Panc1 (cell line): ENCODE measurements at regions of chr3 and their contacts with region 1.

Region 1: GRCh38 chr3:32667122-32667521 is 17.9 kb upstream of the CNOT10 start:
- DNase-seq: no peak
- ATAC-seq: no peak
- H3K4me3 ChIP-seq: no peak overlapping the region
- H3K27ac ChIP-seq: no peak overlapping the region
- H3K4me1 ChIP-seq: no peaks in the 10 kb centered on the region
- H3K27me3 ChIP-seq: no peaks in the 10 kb centered on the region
- CTCF ChIP-seq: no peak

Region 2: DNA sequence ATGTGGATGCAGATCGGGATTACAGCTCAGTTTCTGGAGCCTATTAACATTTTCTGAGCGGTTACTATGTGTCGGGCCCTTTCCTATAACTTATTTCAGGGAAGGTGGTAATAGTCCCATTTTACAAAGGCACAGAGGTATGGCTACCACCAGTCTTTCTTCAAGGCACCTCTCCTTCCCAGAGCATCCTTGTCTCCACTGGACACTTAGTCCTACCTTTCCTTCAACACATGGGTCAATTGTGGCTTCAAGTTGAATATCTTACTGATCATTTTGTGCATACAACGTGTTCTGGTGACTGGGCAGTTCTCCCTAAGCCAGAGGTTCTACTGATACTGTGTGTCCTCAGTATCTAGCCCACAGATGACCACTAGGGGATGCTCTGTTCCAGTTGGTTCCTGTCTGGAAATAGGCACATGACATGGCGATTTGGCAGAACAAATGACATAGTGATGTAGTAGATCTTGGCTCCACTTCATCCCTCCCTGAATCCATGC is 489.4 kb before region 1 on chr3:
- CTCF ChIA-PET with region 1: no interaction called
- POLR2A ChIA-PET with region 1: no interaction called
- in situ Hi-C with region 1: no loop called
- intact Hi-C with region 1: loop called (anchors 10 kb)
- DNase-seq: peak; percentile 80
- ATAC-seq: peak; percentile 96
- H3K4me3 ChIP-seq: peak overlapping the region in 1 of 2 experiments; percentile 30; a peak in 2 of 4 replicates
- H3K27ac ChIP-seq: no peak overlapping the region
- H3K4me1 ChIP-seq: peaks cover 5% of the 10 kb centered on the region
- H3K27me3 ChIP-seq: no peaks in the 10 kb centered on the region
- CTCF ChIP-seq: peak; percentile 85

Region 3: GRCh38 chr3:32510075-32510724 is 156.9 kb before region 1 on chr3:
- CTCF ChIA-PET with region 1: interaction called, 5 read pairs
- POLR2A ChIA-PET with region 1: no interaction called
- in situ Hi-C with region 1: no loop called
- intact Hi-C with region 1: loop called (anchors 2 kb)
- DNase-seq: no peak
- ATAC-seq: peak; percentile 95
- H3K4me3 ChIP-seq: no peak overlapping the region
- H3K27ac ChIP-seq: no peak overlapping the region
- H3K4me1 ChIP-seq: no peaks in the 10 kb centered on the region
- H3K27me3 ChIP-seq: no peaks in the 10 kb centered on the region
- CTCF ChIP-seq: peak; percentile 72

Region 4: DNA sequence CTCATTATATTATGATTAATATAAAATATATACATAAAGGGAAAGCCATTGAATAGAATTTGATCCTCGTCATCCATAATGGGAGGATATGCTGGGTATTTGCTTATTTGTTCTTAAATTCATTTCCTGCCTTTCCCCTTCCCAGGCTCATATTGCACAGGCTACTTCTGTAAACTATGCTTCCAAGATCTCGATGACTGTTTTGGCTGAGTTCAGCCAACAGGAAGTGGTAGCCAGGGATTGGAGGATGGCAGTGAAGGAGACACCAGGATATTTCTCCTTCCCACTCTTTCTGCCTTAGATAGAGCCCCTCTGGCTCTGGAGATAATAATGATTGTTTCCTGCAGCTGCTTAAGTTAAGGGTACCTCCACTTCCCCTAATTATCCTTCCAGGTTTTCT is 52.2 kb before region 1 on chr3:
- CTCF ChIA-PET with region 1: no interaction called
- POLR2A ChIA-PET with region 1: no interaction called
- in situ Hi-C with region 1: no loop called
- intact Hi-C with region 1: no loop called
- DNase-seq: no peak
- ATAC-seq: no peak
- H3K4me3 ChIP-seq: no peak overlapping the region
- H3K27ac ChIP-seq: no peak overlapping the region
- H3K4me1 ChIP-seq: no peaks in the 10 kb centered on the region
- H3K27me3 ChIP-seq: no peaks in the 10 kb centered on the region
- CTCF ChIP-seq: no peak